ENCODE measurements at regions of chr15 and their contacts with region 1.

Region 1: GRCh38 chr15:78195735-78196201 is 38.6 kb downstream of the ACSBG1 start:
- DNase-seq: peak; percentile 8 to 56 (median 46)
- H3K4me3 ChIP-seq: no peak overlapping the region
- H3K4me3 Mint-ChIP-seq: no peak overlapping the region
- H3K27ac ChIP-seq: no peak overlapping the region
- H3K27ac Mint-ChIP-seq: peak overlapping the region in 2 of 8 donors; percentile 6 to 67
- H3K4me1 ChIP-seq: no peaks in the 10 kb centered on the region
- H3K4me1 Mint-ChIP-seq: no peaks in the 10 kb centered on the region
- H3K27me3 ChIP-seq: no peaks in the 10 kb centered on the region
- H3K27me3 Mint-ChIP-seq: no peaks in the 10 kb centered on the region

Region 2: DNA sequence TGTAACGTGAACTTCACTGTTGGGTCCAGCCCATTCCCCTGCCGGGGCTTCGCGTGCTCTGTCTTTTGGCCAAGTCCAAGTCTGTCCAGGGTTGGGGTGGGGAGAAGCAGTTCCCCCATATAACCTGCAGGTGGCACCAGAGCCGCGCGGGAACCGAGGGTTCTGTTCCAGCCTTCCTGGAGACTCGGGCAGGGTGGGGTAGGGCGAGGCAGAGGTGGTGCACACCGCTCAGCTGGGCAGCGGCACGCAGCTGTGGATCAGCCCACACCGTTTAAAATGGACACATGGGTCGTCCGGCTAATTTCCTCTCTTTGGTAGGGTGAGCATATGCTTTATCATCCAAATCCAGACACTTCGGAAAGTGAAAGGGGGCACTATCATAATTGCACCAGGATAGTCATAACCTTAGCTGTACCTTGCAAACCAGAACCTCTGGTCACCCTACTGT is 236.3 kb before region 1 on chr15:
- CTCF ChIA-PET with region 1: interaction called, 12 read pairs
- POLR2A ChIA-PET with region 1: no interaction called
- DNase-seq: peak; percentile 55 to 81 (median 63)
- H3K4me3 ChIP-seq: no peak overlapping the region
- H3K4me3 Mint-ChIP-seq: peak overlapping the region in 1 of 7 donors; percentile 27
- H3K27ac ChIP-seq: no peak overlapping the region
- H3K27ac Mint-ChIP-seq: no peak overlapping the region
- H3K4me1 ChIP-seq: no peaks in the 10 kb centered on the region
- H3K4me1 Mint-ChIP-seq: peaks cover 5 to 12% (median 7%) of the 10 kb centered on the region in 3 donors
- H3K27me3 ChIP-seq: no peaks in the 10 kb centered on the region
- H3K27me3 Mint-ChIP-seq: peaks cover 2 to 6% of the 10 kb centered on the region in 2 donors

Region 3: DNA sequence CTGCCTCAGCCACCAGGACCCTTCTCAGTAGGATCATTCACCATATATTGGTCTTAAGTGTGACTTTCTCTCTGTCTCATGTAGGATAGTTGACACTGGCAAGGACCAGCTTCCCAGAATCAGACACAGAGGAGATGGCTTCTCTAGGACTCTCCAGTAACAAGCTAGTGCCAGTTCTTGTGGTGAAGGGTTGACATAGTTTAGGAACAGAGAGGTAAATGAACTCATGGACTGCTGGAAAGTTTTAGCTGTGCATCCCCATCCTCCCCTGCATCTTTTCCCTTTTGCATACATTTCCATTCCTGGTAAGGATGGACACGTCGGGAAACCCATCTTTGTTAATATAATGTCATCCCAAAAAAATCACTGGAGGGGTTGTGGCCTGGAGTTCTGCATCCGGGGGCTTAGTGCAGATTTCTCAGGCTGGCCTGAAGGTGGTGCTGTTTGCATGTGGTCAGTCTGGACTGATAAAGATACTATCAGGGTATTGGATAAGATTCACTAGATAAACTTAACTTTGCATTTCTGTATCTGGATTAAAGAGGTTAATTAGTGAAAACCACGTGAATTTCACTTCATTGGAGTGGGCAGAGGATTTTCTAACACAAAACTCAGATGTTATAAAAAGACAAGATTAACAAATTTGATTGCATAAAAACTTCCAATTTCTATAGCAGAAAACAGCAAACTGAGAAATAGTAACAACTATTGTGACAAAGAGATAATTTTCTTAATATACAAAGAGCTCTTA is 229.1 kb before region 1 on chr15:
- CTCF ChIA-PET with region 1: interaction called, 10 read pairs
- POLR2A ChIA-PET with region 1: no interaction called
- DNase-seq: peak; percentile 30 to 67 (median 39)
- H3K4me3 ChIP-seq: no peak overlapping the region
- H3K4me3 Mint-ChIP-seq: no peak overlapping the region
- H3K27ac ChIP-seq: no peak overlapping the region
- H3K27ac Mint-ChIP-seq: no peak overlapping the region
- H3K4me1 ChIP-seq: no peaks in the 10 kb centered on the region
- H3K4me1 Mint-ChIP-seq: no peaks in the 10 kb centered on the region
- H3K27me3 ChIP-seq: no peaks in the 10 kb centered on the region
- H3K27me3 Mint-ChIP-seq: peaks cover 0 to 3% of the 10 kb centered on the region in 2 donors

Region 4: GRCh38 chr15:78034495-78035191 is 161.1 kb before region 1 on chr15:
- CTCF ChIA-PET with region 1: no interaction called
- POLR2A ChIA-PET with region 1: no interaction called
- DNase-seq: peak; percentile 63 to 90 (median 78)
- H3K4me3 ChIP-seq: peak overlapping the region; percentile 38
- H3K4me3 Mint-ChIP-seq: peak overlapping the region; percentile 57 to 84 (median 78)
- H3K27ac ChIP-seq: peak overlapping the region; percentile 75
- H3K27ac Mint-ChIP-seq: peak overlapping the region; percentile 73 to 99 (median 96)
- H3K4me1 ChIP-seq: peaks cover 64% of the 10 kb centered on the region
- H3K4me1 Mint-ChIP-seq: peaks cover 84 to 95% (median 88%) of the 10 kb centered on the region in 3 donors
- H3K27me3 ChIP-seq: no peaks in the 10 kb centered on the region
- H3K27me3 Mint-ChIP-seq: peaks cover 0 to 2% of the 10 kb centered on the region in 2 donors

Region 5: GRCh38 chr15:78120523-78120922 is 75.2 kb before region 1 on chr15:
- CTCF ChIA-PET with region 1: interaction called, 101 read pairs
- POLR2A ChIA-PET with region 1: no interaction called
- DNase-seq: no peak
- H3K4me3 ChIP-seq: no peak overlapping the region
- H3K4me3 Mint-ChIP-seq: no peak overlapping the region
- H3K27ac ChIP-seq: no peak overlapping the region
- H3K27ac Mint-ChIP-seq: no peak overlapping the region
- H3K4me1 ChIP-seq: no peaks in the 10 kb centered on the region
- H3K4me1 Mint-ChIP-seq: no peaks in the 10 kb centered on the region
- H3K27me3 ChIP-seq: no peaks in the 10 kb centered on the region
- H3K27me3 Mint-ChIP-seq: no peaks in the 10 kb centered on the region

Region 6: GRCh38 chr15:78131295-78132061 is 64.3 kb before region 1 on chr15 and contains the start of gene CIB2:
- CTCF ChIA-PET with region 1: interaction called, 17 read pairs
- POLR2A ChIA-PET with region 1: no interaction called
- DNase-seq: peak; percentile 68 to 85 (median 78)
- H3K4me3 ChIP-seq: peak within 1 kb of the TSS; percentile 73
- H3K4me3 Mint-ChIP-seq: peak within 1 kb of the TSS; percentile 80 to 90 (median 82)
- H3K27ac ChIP-seq: peak within 1 kb of the TSS; percentile 68
- H3K27ac Mint-ChIP-seq: peak within 1 kb of the TSS; percentile 56 to 95 (median 88)
- H3K4me1 ChIP-seq: peaks cover 12% of the 10 kb centered on the region
- H3K4me1 Mint-ChIP-seq: peaks cover 17 to 25% (median 21%) of the 10 kb centered on the region in 3 donors
- H3K27me3 ChIP-seq: no peaks in the 10 kb centered on the region
- H3K27me3 Mint-ChIP-seq: no peaks in the 10 kb centered on the region
- total RNA-seq, gene CIB2: 2.1 to 2.3 TPM

Region 7: GRCh38 chr15:78225783-78226541 is 30.2 kb after region 1 on chr15:
- CTCF ChIA-PET with region 1: interaction called, 10 read pairs
- POLR2A ChIA-PET with region 1: no interaction called
- DNase-seq: no peak
- H3K4me3 ChIP-seq: no peak overlapping the region
- H3K4me3 Mint-ChIP-seq: peak overlapping the region in 4 of 7 donors; percentile 21 to 52 (median 36)
- H3K27ac ChIP-seq: no peak overlapping the region
- H3K27ac Mint-ChIP-seq: peak overlapping the region in 4 of 8 donors; percentile 38 to 68 (median 50)
- H3K4me1 ChIP-seq: peaks cover 9% of the 10 kb centered on the region
- H3K4me1 Mint-ChIP-seq: peaks cover 14 to 27% (median 23%) of the 10 kb centered on the region in 3 donors
- H3K27me3 ChIP-seq: no peaks in the 10 kb centered on the region
- H3K27me3 Mint-ChIP-seq: no peaks in the 10 kb centered on the region

Region 8: GRCh38 chr15:78241007-78241406 is 45.2 kb after region 1 on chr15:
- CTCF ChIA-PET with region 1: interaction called, 25 read pairs
- POLR2A ChIA-PET with region 1: interaction called, 4 read pairs
- DNase-seq: peak; percentile 64 to 85 (median 71)
- H3K4me3 ChIP-seq: no peak overlapping the region
- H3K4me3 Mint-ChIP-seq: no peak overlapping the region
- H3K27ac ChIP-seq: no peak overlapping the region
- H3K27ac Mint-ChIP-seq: peak overlapping the region in 1 of 8 donors; percentile 63
- H3K4me1 ChIP-seq: no peaks in the 10 kb centered on the region
- H3K4me1 Mint-ChIP-seq: peaks cover 2 to 4% (median 3%) of the 10 kb centered on the region in 3 donors
- H3K27me3 ChIP-seq: no peaks in the 10 kb centered on the region
- H3K27me3 Mint-ChIP-seq: peaks cover 0 to 6% of the 10 kb centered on the region in 2 donors

Measured in CD8-positive, alpha-beta memory T cell (primary cell).